ENCODE measurements at regions of chr1 and their contacts with region 1.

Region 1: DNA sequence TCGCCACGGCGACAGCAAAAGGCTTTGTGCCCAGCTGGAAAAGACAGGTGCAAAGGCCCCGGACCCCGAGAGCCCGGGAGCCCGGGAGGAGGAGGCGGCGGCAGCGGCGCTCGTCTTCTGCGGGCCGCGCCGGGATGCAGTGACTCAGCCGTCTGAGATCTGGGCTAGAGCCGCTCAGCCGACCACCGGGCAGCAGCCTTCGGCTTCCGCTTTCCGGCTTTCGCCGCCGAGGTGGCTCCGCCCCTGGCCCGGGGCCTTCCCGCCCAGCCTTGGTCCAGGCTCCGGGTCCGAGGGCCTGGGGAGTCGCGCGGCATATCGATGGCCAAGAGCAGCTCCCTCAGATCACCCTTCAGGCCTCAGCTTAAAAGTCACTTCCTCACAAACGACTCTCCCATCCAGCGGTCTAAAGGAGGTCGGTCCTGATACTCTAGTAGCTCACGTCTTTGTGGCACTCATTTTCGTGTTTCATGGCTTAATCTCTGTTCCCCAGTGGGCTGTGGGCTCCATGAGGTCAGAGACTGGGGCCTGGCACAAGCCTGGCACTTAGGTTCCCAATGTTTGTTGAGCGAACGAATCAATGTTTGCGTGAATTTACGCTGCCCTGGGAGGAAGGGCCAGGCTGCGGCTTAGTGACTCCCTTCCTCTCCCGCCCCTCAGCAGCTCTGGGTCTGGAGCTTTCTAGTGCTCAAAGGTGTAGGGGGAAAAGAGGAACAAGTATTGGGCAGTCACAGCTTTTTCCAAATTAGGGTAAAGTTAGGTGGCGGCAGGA is at the start of gene PHTF1:
- DNase-seq: peak; percentile 81
- ATAC-seq: peak; percentile 96
- H3K4me3 ChIP-seq: peak within 1 kb of the TSS; percentile 86
- H3K27ac ChIP-seq: peak within 1 kb of the TSS; percentile 94
- H3K4me1 ChIP-seq: no peaks in the 10 kb centered on the region
- H3K27me3 ChIP-seq: no peaks in the 10 kb centered on the region
- CTCF ChIP-seq: no peak
- POLR2A ChIP-seq: peak; percentile 81; the same call in 1 of the 2 replicates
- RAD21 ChIP-seq: 0 out of 2 replicates have a peak, but pooled peaks have one; percentile 3
- total RNA-seq, gene PHTF1: 13.3 and 20.6 TPM in 2 replicates

Region 2: GRCh38 chr1:112461194-112462082 is 1298.1 kb before region 1 on chr1:
- CTCF ChIA-PET with region 1: no interaction called
- POLR2A ChIA-PET with region 1: no interaction called
- dilution Hi-C with region 1: no loop called
- in situ Hi-C with region 1: no loop called
- intact Hi-C with region 1: no loop called
- DNase-seq: no peak
- ATAC-seq: no peak
- H3K4me3 ChIP-seq: no peak overlapping the region
- H3K27ac ChIP-seq: no peak overlapping the region
- H3K4me1 ChIP-seq: peaks cover 35% of the 10 kb centered on the region
- H3K27me3 ChIP-seq: no peaks in the 10 kb centered on the region
- CTCF ChIP-seq: no peak
- POLR2A ChIP-seq: no peak
- RAD21 ChIP-seq: no peak

Region 3: GRCh38 chr1:113123737-113124136 is 635.8 kb before region 1 on chr1:
- CTCF ChIA-PET with region 1: no interaction called
- POLR2A ChIA-PET with region 1: no interaction called
- dilution Hi-C with region 1: no loop called
- in situ Hi-C with region 1: no loop called
- intact Hi-C with region 1: loop called (anchors 10 kb)
- DNase-seq: peak; percentile 85
- ATAC-seq: peak; percentile 96
- H3K4me3 ChIP-seq: no peak overlapping the region
- H3K27ac ChIP-seq: no peak overlapping the region
- H3K4me1 ChIP-seq: peaks cover 3% of the 10 kb centered on the region; the same call in 1 of the 2 replicates
- H3K27me3 ChIP-seq: no peaks in the 10 kb centered on the region
- CTCF ChIP-seq: no peak
- POLR2A ChIP-seq: no peak
- RAD21 ChIP-seq: no peak

Region 4: GRCh38 chr1:113429443-113430153 is 329.9 kb before region 1 on chr1:
- CTCF ChIA-PET with region 1: no interaction called
- POLR2A ChIA-PET with region 1: interaction called, 10 read pairs
- dilution Hi-C with region 1: no loop called
- in situ Hi-C with region 1: no loop called
- intact Hi-C with region 1: no loop called
- DNase-seq: peak; percentile 10
- ATAC-seq: no peak
- H3K4me3 ChIP-seq: no peak overlapping the region
- H3K27ac ChIP-seq: no peak overlapping the region
- H3K4me1 ChIP-seq: no peaks in the 10 kb centered on the region
- H3K27me3 ChIP-seq: no peaks in the 10 kb centered on the region
- CTCF ChIP-seq: no peak
- POLR2A ChIP-seq: no peak
- RAD21 ChIP-seq: no peak

Region 5: DNA sequence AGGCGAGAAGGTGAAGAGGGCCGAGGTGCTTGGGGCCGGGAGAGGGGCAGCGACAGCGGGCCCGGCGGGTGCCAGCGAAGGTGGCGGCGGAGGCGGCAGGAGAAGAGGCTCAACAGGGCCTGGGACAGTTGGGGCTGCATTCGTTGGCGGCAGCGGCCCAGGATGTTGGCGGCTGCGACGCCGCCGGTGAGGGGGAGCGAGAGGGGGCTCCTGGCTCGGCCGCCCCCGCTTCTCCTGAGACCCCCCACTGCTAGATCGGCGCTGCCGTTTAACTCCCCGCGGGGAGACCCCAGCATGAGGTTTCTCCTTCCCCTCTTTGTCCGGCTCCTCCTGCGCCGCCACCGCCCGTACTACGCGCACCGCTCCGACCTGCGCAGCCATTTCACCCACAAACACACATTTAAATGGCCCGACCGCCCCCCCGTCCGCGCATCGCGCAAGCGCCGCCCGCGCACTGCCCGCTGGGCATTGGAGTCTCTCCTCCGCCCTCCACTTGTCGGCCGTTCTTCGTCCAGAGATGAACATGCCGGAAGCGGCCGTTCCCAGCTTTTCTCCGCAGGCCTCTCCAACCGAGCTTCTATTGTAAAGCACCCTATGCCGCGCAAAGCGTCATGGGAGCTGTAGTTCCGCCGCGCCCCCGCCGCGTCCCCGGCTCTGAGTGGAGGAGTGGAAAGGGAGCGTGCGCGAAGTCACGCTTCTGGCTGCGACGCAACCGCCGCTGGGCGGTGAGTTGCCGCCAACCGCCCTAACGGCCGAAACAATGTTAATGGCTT is 52.6 kb after region 1 on chr1 and contains the start of gene RSBN1:
- CTCF ChIA-PET with region 1: no interaction called
- POLR2A ChIA-PET with region 1: interaction called, 16 read pairs
- dilution Hi-C with region 1: no loop called
- in situ Hi-C with region 1: no loop called
- intact Hi-C with region 1: loop called (anchors 1 kb)
- DNase-seq: peak; percentile 99
- ATAC-seq: peak; percentile 96
- H3K4me3 ChIP-seq: peak within 1 kb of the TSS; percentile 97
- H3K27ac ChIP-seq: peak within 1 kb of the TSS; percentile 60
- H3K4me1 ChIP-seq: peaks cover 4% of the 10 kb centered on the region
- H3K27me3 ChIP-seq: no peaks in the 10 kb centered on the region
- CTCF ChIP-seq: no peak
- POLR2A ChIP-seq: peak; percentile 95
- RAD21 ChIP-seq: no peak; the same call in 1 of the 2 replicates
- total RNA-seq, gene RSBN1: 11.7 and 12.8 TPM in 2 replicates